H1 (cell line): ENCODE measurements at regions of chr17 and their contacts with region 1.

Region 1: GRCh38 chr17:76397687-76398487 is 13.5 kb downstream of the SPHK1 start:
- DNase-seq: peak; percentile 81 to 98
- H3K4me3 ChIP-seq: no peak overlapping the region
- H3K27ac ChIP-seq: 0 out of 2 replicates have a peak overlapping the region, but pooled peaks have one; percentile 17
- H3K4me1 ChIP-seq: no peaks in the 10 kb centered on the region
- H3K27me3 ChIP-seq: no peaks in the 10 kb centered on the region
- CTCF ChIP-seq: peak; percentile 94 to 100 (median 94)
- EP300 ChIP-seq: no peak
- POLR2A ChIP-seq: no peak
- RAD21 ChIP-seq: peak; percentile 88 to 90

Region 2: GRCh38 chr17:76314392-76315227 is 83.3 kb before region 1 on chr17:
- CTCF ChIA-PET with region 1: interaction called, 161 read pairs
- POLR2A ChIA-PET with region 1: no interaction called
- DNase-seq: no peak
- H3K4me3 ChIP-seq: no peak overlapping the region
- H3K27ac ChIP-seq: no peak overlapping the region
- H3K4me1 ChIP-seq: no peaks in the 10 kb centered on the region
- H3K27me3 ChIP-seq: no peaks in the 10 kb centered on the region
- CTCF ChIP-seq: no peak
- EP300 ChIP-seq: no peak
- POLR2A ChIP-seq: no peak
- RAD21 ChIP-seq: no peak

Region 3: DNA sequence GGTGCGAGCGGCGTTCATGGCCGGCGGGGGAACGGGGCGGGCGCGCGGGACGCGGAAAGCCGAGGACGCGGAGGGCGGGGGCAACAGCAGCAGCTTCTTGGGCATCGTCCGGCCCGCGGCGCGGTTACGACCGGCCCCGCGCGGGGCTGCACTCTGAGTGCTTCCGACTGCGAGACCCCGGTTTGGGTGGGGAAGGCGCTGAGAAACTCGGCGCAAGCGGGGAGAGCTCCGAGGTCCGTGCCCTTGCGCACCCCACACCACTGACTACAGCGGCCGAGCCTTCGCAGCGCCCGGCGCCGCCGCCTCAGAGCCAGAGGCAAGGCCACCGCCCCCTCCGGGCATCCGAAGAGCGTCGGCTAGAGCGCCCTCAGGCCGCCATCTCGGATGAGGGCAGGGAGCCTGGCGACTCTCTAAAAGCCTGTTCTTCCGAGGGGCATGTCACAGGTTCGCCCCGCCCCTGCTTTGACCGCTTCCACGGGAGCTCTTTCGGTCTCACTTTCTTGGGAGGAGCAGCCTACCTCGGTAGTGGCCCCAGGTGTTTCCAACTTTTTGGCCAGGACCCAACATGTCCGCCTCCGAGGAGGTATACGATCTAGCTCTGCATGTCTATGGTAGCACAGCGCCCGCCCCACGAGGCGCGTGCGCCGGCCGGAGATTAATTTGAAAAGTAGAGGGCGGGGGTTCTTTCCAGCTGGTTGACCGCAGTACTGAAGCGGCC is 44.1 kb before region 1 on chr17 and contains the start of gene PRPSAP1:
- CTCF ChIA-PET with region 1: interaction called, 635 read pairs
- POLR2A ChIA-PET with region 1: no interaction called
- DNase-seq: peak; percentile 68 to 91
- H3K4me3 ChIP-seq: peak within 1 kb of the TSS; percentile 67 to 87 (median 72)
- H3K27ac ChIP-seq: peak within 1 kb of the TSS; percentile 100
- H3K4me1 ChIP-seq: peaks cover 0 to 6% (median 0%) of the 10 kb centered on the region in 4 experiments; a peak in 3 of 7 replicates
- H3K27me3 ChIP-seq: no peaks in the 10 kb centered on the region
- CTCF ChIP-seq: peak in 1 of 3 experiments; percentile 2; a peak in 1 of 4 replicates
- EP300 ChIP-seq: no peak
- POLR2A ChIP-seq: peak; percentile 53 to 87
- RAD21 ChIP-seq: no peak
- total RNA-seq, gene PRPSAP1: 42.8 and 54.2 TPM in 2 replicates

Region 4: DNA sequence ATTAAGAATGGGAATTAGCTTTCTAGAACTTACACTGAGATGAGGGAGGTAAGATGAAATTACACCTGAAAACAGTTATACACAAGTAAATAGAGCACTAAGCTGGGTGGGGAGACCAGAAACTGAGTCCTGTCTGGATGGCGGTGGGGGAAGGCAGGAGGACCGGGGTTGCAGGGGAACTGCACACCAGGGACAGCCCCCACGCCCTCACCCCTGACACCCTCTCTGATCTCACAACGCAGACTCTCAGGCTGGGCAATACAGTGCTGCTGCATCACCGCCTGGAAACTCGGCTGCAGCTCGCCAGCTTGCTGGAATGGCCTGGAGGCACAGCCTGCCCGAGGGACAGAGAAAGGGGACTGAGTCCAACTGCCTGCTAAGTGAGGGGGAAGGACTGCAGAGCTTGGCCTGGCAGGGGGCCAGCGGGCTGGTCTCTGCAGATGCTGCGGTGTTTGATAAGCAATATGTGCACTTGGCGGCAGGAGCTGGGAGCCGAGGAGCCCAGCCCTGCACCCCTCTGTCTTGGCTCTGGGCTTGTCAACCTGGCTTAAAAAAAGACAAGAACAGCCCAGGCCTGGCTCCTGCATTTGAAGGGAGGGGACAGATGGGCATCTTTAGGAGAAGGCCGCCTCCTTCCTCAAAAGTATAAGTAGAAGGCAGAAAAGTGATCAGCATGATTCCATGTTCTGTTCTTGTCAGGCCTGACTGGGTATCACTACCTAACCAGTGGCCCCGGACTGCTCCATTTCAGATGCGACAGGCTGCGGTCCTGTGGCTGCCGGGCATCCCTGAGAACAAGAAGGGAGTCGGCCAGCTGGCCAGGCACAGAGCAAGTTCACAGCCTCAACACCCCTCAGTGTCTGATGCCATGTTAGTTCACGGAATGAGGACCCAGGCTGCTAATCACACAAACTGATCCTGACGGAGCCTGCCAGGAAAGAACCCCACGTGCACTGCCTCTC is 16.7 kb after region 1 on chr17:
- CTCF ChIA-PET with region 1: interaction called, 57 read pairs
- POLR2A ChIA-PET with region 1: interaction called, 3 read pairs
- DNase-seq: no peak
- H3K4me3 ChIP-seq: no peak overlapping the region
- H3K27ac ChIP-seq: no peak overlapping the region
- H3K4me1 ChIP-seq: peaks cover 4 to 11% (median 6%) of the 10 kb centered on the region in 4 experiments
- H3K27me3 ChIP-seq: no peaks in the 10 kb centered on the region
- CTCF ChIP-seq: no peak
- EP300 ChIP-seq: no peak
- POLR2A ChIP-seq: no peak
- RAD21 ChIP-seq: no peak

Region 5: GRCh38 chr17:76458580-76459490 is 60.9 kb after region 1 on chr17:
- CTCF ChIA-PET with region 1: interaction called, 197 read pairs
- POLR2A ChIA-PET with region 1: no interaction called
- DNase-seq: peak; percentile 79 to 83
- H3K4me3 ChIP-seq: no peak overlapping the region
- H3K27ac ChIP-seq: no peak overlapping the region
- H3K4me1 ChIP-seq: peaks cover 0 to 8% (median 3%) of the 10 kb centered on the region in 4 experiments; a peak in 4 of 7 replicates
- H3K27me3 ChIP-seq: no peaks in the 10 kb centered on the region
- CTCF ChIP-seq: peak; percentile 66 to 86 (median 85)
- EP300 ChIP-seq: no peak
- POLR2A ChIP-seq: no peak
- RAD21 ChIP-seq: peak; percentile 68 to 78